ENCODE measurements at regions of chr2 and their contacts with region 1.

Region 1: GRCh38 chr2:120680136-120680761 is 55.4 kb upstream of the GLI2 start:
- DNase-seq: peak; percentile 69 to 81
- ATAC-seq: peak; percentile 75 to 93 (median 76)
- H3K4me3 ChIP-seq: no peak overlapping the region
- H3K27ac ChIP-seq: no peak overlapping the region
- H3K4me1 ChIP-seq: peaks cover 0 to 12% (median 4%) of the 10 kb centered on the region in 9 donors
- H3K27me3 ChIP-seq: peaks cover 0 to 66% (median 36%) of the 10 kb centered on the region in 7 donors
- CTCF ChIP-seq: peak; percentile 28 to 63 (median 55)

Region 2: DNA sequence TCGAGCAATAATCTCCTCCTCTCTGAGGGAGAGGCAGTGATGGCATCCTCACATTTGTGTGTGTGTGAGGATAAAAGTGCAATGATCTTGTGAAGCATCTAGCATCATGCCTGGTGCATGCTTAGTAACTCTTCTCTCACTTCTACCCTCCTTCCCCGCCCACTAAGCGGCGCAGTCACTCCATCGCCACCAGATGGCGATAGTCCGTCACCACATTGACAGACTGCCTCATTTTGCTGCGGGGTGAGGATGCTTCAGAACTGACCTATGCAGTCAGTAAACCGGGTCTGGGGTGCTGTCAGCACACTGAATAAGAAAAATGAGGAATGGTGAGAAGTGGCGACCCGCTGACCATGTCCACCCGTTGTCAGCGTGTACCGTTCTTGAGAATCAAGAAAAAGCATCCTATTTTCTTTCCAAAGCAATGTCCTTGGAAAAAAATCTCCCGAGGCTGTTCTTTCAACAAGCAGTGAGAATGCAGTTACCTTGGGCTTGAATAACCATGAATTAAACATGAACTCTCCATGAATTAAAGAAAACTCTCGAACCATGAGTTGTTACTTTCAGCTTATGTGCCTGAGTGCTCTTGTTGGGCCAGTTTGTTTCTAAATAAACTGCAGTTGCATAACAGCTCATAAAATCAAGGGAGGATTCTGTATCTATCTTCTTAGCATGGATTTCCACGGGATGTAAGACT is 1038.5 kb before region 1 on chr2:
- intact Hi-C with region 1: loop called in 1 of 10 experiments (anchors 10 kb)
- DNase-seq: peak; percentile 63 to 66
- ATAC-seq: peak; percentile 75 to 91 (median 84)
- H3K4me3 ChIP-seq: no peak overlapping the region
- H3K27ac ChIP-seq: no peak overlapping the region
- H3K4me1 ChIP-seq: peaks cover 0 to 22% (median 6%) of the 10 kb centered on the region in 9 donors
- H3K27me3 ChIP-seq: peaks cover 0 to 8% (median 0%) of the 10 kb centered on the region in 7 donors
- CTCF ChIP-seq: peak; percentile 69 to 97 (median 94)

Region 3: GRCh38 chr2:120066800-120067547 is 613.3 kb before region 1 on chr2:
- intact Hi-C with region 1: no loop called
- DNase-seq: peak in 1 of 2 donors; percentile 12
- ATAC-seq: peak; percentile 38 to 93 (median 74)
- H3K4me3 ChIP-seq: no peak overlapping the region
- H3K27ac ChIP-seq: peak overlapping the region in 1 of 10 donors; percentile 21
- H3K4me1 ChIP-seq: peaks cover 0 to 19% (median 5%) of the 10 kb centered on the region in 9 donors
- H3K27me3 ChIP-seq: no peaks in the 10 kb centered on the region
- CTCF ChIP-seq: no peak

Region 4: DNA sequence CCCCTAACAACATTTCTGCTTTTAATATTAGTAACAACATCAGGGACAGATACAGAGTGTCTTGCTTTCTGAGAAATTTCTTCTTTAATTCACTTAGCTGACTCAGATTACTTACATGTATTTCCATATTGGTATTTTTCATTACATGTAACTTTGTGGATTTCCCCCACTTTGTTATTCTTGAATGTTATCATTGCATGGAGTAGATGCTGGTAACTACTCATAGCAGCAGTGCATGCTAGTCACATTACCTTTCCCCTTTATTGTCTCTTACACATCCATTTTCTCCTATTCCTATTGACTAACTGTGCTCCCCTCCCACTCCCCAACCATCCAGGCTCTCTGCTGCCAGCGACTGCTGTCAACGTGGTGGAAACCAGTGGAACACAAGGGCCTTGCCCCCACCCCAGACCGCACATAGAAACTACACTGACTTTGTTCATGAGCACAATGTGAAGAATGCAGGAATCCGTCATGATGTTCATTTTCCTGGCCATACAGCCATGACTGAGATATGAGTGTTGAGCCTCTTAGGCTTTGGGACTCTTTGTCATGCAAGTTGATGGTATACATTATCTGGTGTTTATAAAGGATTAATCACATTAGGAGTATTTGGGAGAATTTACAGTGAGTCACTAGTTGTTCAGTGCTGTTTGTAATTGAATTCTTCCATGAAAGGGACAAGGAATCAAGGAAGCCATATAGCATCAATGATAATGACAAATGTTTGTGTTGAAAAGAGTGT is 576.4 kb before region 1 on chr2:
- intact Hi-C with region 1: loop called in 2 of 10 experiments (anchors 5 to 10 kb)
- DNase-seq: no peak
- ATAC-seq: no peak
- H3K4me3 ChIP-seq: no peak overlapping the region
- H3K27ac ChIP-seq: no peak overlapping the region
- H3K4me1 ChIP-seq: peaks cover 0 to 19% (median 14%) of the 10 kb centered on the region in 9 donors
- H3K27me3 ChIP-seq: no peaks in the 10 kb centered on the region
- CTCF ChIP-seq: no peak

Region 5: GRCh38 chr2:120343433-120344105 is 336.7 kb before region 1 on chr2:
- intact Hi-C with region 1: loop called (anchors 1 to 5 kb)
- DNase-seq: peak; percentile 78 to 84
- ATAC-seq: peak; percentile 82 to 95 (median 91)
- H3K4me3 ChIP-seq: peak overlapping the region in 9 of 10 donors; percentile 26 to 63 (median 50)
- H3K27ac ChIP-seq: peak overlapping the region in 3 of 10 donors; percentile 56 to 83 (median 65)
- H3K4me1 ChIP-seq: peaks cover 13 to 51% (median 36%) of the 10 kb centered on the region in 9 donors
- H3K27me3 ChIP-seq: peaks cover 12 to 90% (median 72%) of the 10 kb centered on the region in 7 donors
- CTCF ChIP-seq: peak; percentile 70 to 96 (median 85)

Region 6: DNA sequence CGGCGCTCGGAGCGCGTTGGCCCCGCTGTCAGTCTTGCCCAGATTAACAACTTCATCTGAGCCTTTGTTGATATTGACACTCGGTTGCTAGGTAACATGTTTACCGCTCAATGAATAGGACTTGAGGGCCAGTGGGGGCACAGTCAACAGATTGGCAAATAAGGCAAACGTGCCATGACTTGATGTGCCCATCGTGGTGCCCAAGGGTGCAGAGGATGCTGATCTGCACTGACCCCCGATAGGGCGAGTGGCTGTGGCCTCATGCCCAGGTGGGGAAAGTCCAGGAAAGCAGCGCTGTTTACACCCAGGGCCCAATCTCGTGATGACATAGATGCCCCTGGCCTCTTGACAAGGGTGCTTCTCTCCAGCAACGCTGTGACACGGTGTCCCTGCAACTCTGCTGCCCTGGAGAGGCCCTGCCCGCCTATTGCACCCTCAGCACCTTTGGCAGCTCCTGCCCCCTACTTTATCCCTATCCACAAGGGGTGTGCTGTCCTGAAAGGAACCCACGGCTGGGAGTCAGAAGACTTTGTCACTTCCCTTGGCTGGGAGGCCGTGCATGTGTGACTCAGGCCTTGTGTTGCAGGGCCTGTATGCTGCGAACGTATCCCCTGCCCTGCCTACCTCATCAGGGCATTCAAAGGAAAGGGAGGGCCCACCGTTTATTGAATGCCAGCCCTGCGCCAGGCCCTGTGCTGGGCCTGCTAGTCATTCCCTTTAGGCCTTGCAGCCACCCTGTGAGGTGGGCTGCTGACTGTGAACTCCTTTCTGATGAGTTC is 176.3 kb before region 1 on chr2:
- intact Hi-C with region 1: loop called in 1 of 10 experiments (anchors 5 kb)
- DNase-seq: peak; percentile 72 to 73
- ATAC-seq: peak; percentile 66 to 96 (median 90)
- H3K4me3 ChIP-seq: no peak overlapping the region
- H3K27ac ChIP-seq: peak overlapping the region in 9 of 10 donors; percentile 46 to 78 (median 60)
- H3K4me1 ChIP-seq: peaks cover 0 to 21% (median 9%) of the 10 kb centered on the region in 9 donors
- H3K27me3 ChIP-seq: peaks cover 0 to 5% (median 0%) of the 10 kb centered on the region in 7 donors
- CTCF ChIP-seq: peak in 4 of 9 donors; percentile 15 to 50 (median 34)

Region 7: GRCh38 chr2:120520929-120521912 is 159.0 kb before region 1 on chr2:
- intact Hi-C with region 1: loop called in 1 of 10 experiments (anchors 10 kb)
- DNase-seq: no peak
- ATAC-seq: peak in 4 of 8 donors; percentile 14 to 60 (median 27)
- H3K4me3 ChIP-seq: no peak overlapping the region
- H3K27ac ChIP-seq: no peak overlapping the region
- H3K4me1 ChIP-seq: peaks cover 12 to 41% (median 30%) of the 10 kb centered on the region in 9 donors
- H3K27me3 ChIP-seq: peaks cover 0 to 34% (median 16%) of the 10 kb centered on the region in 7 donors
- CTCF ChIP-seq: peak; percentile 29 to 81 (median 70)

Region 8: DNA sequence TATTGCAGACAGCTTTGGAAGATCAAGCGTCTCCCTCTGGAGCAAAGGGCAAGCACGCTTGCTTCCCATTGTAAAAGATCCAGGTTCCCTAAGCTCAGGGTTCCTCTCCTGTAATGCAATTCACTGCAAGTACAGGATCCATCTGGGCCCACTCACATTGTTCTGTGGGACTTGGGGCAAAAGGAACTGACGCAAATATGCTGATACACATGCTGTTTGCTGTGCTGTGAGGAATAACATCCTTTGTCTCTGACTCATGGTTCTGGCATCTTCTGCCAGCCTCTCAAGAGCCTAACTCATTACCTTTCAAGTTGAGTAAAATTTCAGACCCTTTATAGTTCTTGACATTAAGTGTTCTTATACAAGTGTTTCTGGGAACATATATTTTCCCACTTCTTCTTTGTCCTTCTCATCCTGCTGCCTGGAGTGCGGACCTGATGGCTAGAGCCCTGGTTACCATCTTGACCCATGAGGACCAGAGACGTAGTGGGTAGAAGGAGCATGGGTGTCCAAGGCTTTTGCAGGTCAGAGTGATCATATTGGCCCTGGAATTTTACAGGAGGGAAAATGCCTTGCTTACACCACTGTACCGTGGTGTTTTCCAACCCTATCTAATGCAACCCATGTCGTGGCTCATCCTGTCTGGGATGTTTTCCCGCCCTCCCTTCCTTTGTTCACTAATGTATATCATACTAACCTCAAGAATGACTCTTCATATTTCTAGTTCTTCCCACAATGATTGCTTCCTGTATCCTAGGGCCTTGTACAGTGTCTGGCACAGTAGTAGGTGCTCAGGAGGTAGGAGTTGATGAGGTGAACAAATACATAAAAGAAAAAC is 90.3 kb before region 1 on chr2:
- intact Hi-C with region 1: loop called in 1 of 10 experiments (anchors 10 kb)
- DNase-seq: no peak
- ATAC-seq: peak in 4 of 8 donors; percentile 20 to 88 (median 57)
- H3K4me3 ChIP-seq: no peak overlapping the region
- H3K27ac ChIP-seq: peak overlapping the region in 2 of 10 donors; percentile 33 to 41
- H3K4me1 ChIP-seq: peaks cover 0 to 11% (median 4%) of the 10 kb centered on the region in 9 donors
- H3K27me3 ChIP-seq: peaks cover 8 to 39% (median 27%) of the 10 kb centered on the region in 7 donors
- CTCF ChIP-seq: no peak

Measured in heart right ventricle (tissue), 16 donors.